ENCODE measurements at regions of chr20 and their contacts with region 1.

Region 1: GRCh38 chr20:51695574-51696303 is 72.5 kb downstream of the ATP9A start:
- DNase-seq: peak; percentile 39
- H3K4me3 Mint-ChIP-seq: no peak overlapping the region
- H3K27ac Mint-ChIP-seq: peak overlapping the region; percentile 61
- H3K4me1 Mint-ChIP-seq: peaks cover 21% of the 10 kb centered on the region
- H3K27me3 Mint-ChIP-seq: no peaks in the 10 kb centered on the region
- CTCF ChIP-seq: no peak

Region 2: DNA sequence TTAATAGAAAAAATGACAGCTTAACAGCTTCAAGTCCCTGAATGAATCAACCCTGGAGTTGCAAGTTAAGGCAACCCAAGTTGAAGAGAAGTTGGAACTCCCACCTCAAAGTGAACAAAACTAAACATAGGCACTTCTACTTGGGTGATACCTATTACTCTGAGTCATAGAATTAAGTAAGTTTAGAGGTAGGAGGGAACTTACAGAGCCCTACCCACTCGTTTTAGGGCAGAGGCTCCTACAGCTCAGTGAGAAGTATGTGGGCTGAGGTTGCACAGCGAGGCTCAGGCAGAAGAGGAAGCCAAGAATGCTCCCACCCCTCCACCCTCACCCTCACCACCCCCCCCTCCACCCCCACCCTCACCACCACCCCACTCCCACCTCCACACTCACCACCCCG is 195.4 kb before region 1 on chr20:
- CTCF ChIA-PET with region 1: no interaction called
- POLR2A ChIA-PET with region 1: no interaction called
- intact Hi-C with region 1: no loop called
- DNase-seq: peak; percentile 53
- H3K4me3 Mint-ChIP-seq: no peak overlapping the region
- H3K27ac Mint-ChIP-seq: no peak overlapping the region
- H3K4me1 Mint-ChIP-seq: no peaks in the 10 kb centered on the region
- H3K27me3 Mint-ChIP-seq: peaks cover 13% of the 10 kb centered on the region
- CTCF ChIP-seq: no peak

Region 3: DNA sequence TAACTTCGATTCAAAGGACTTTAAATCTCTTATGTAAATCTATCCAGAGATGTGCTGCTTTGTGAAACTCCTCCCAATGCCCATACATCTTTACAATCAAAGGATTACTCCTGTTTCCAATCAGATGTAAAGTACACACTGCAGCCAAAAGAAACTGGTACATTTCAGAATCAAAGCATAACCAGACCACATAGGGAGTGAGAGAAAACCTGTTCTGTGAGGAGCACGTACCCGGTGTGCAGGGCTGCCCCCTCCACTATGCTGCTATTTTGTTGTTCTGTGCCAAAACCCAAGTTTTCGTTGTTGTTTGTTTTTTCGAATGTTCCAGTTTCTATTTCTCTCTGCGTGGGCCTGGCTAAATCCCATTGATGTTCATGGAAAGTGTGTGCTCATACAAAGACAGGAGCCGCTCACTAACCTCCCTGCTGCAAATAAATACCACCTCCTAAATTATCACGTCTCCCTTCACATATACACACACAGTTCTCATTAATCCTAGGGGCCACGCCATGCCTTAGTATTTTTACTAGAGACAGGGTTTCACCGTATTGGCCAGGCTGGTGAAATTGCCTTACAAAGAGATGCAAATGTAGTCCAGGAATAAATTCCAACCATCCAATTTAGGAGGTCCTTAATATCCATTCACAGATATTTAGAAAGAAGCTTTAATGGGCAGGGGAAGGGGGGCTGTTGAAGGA is 19.6 kb after region 1 on chr20:
- CTCF ChIA-PET with region 1: interaction called, 16 read pairs
- POLR2A ChIA-PET with region 1: interaction called, 3 read pairs
- intact Hi-C with region 1: no loop called
- DNase-seq: no peak
- H3K4me3 Mint-ChIP-seq: no peak overlapping the region
- H3K27ac Mint-ChIP-seq: no peak overlapping the region
- H3K4me1 Mint-ChIP-seq: no peaks in the 10 kb centered on the region
- H3K27me3 Mint-ChIP-seq: no peaks in the 10 kb centered on the region
- CTCF ChIP-seq: no peak

Region 4: GRCh38 chr20:51750037-51750763 is 54.5 kb after region 1 on chr20:
- CTCF ChIA-PET with region 1: interaction called, 10 read pairs
- POLR2A ChIA-PET with region 1: interaction called, 10 read pairs
- intact Hi-C with region 1: loop called (anchors 5 kb)
- DNase-seq: peak; percentile 99
- H3K4me3 Mint-ChIP-seq: peak overlapping the region; percentile 59
- H3K27ac Mint-ChIP-seq: peak overlapping the region; percentile 94
- H3K4me1 Mint-ChIP-seq: peaks cover 26% of the 10 kb centered on the region
- H3K27me3 Mint-ChIP-seq: no peaks in the 10 kb centered on the region
- CTCF ChIP-seq: no peak

Region 5: DNA sequence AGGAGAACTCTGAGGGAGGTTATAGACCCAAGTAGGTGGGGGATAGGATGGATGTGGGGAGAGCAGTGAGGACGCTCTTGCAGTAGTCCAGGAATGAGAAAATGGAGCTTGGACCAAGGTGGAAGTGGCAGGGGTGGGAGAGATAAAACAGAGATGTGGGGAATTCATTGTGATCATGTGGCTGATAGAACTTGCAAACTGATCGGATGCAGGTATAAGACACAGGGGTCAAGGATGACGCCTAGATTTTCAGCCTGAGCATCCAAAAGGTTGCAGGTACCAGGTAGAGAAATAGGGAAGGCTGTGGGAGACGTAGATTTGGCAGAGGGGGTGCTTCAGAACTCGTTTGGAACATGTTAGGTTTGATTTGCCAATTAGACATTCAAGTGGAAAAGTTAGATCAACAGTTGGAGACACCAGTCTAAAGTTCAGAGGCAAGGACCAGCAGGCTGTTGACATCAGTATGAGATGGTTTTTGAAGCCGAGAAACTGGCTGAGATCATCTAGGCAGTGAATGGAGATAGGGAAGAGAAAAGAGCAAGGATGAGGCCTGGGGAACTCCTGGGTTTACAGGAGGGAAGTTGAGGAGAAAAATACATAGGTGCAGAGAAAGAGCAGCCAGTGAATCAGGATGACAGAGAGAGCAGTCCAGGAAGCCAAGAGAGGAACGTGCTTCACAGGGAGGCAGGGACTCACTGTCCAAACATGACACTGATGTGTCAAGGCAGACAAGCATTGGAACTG is 119.5 kb after region 1 on chr20:
- CTCF ChIA-PET with region 1: no interaction called
- POLR2A ChIA-PET with region 1: no interaction called
- intact Hi-C with region 1: no loop called
- DNase-seq: no peak
- H3K4me3 Mint-ChIP-seq: no peak overlapping the region
- H3K27ac Mint-ChIP-seq: no peak overlapping the region
- H3K4me1 Mint-ChIP-seq: peaks cover 4% of the 10 kb centered on the region
- H3K27me3 Mint-ChIP-seq: peaks cover 10% of the 10 kb centered on the region
- CTCF ChIP-seq: no peak

Region 6: GRCh38 chr20:52060794-52061714 is 365.3 kb after region 1 on chr20:
- CTCF ChIA-PET with region 1: interaction called, 11 read pairs
- POLR2A ChIA-PET with region 1: interaction called, 5 read pairs
- intact Hi-C with region 1: no loop called
- DNase-seq: peak; percentile 33
- H3K4me3 Mint-ChIP-seq: no peak overlapping the region
- H3K27ac Mint-ChIP-seq: no peak overlapping the region
- H3K4me1 Mint-ChIP-seq: peaks cover 9% of the 10 kb centered on the region
- H3K27me3 Mint-ChIP-seq: no peaks in the 10 kb centered on the region
- CTCF ChIP-seq: peak; percentile 32